Psoas muscle (tissue), 8 donors: ENCODE measurements at regions of chr11 and their contacts with region 1.

Region 1: GRCh38 chr11:76444384-76445123 is at the start of gene EMSY:
- DNase-seq: peak; percentile 95 to 98
- ATAC-seq: peak; percentile 95 to 97 (median 97)
- H3K4me3 ChIP-seq: peak within 1 kb of the TSS; percentile 96
- H3K27ac ChIP-seq: peak within 1 kb of the TSS; percentile 91
- H3K4me1 ChIP-seq: no peaks in the 10 kb centered on the region
- H3K27me3 ChIP-seq: no peaks in the 10 kb centered on the region
- CTCF ChIP-seq: no peak
- total RNA-seq, gene EMSY: 12.7 to 17.2 (median 15.9) TPM

Region 2: DNA sequence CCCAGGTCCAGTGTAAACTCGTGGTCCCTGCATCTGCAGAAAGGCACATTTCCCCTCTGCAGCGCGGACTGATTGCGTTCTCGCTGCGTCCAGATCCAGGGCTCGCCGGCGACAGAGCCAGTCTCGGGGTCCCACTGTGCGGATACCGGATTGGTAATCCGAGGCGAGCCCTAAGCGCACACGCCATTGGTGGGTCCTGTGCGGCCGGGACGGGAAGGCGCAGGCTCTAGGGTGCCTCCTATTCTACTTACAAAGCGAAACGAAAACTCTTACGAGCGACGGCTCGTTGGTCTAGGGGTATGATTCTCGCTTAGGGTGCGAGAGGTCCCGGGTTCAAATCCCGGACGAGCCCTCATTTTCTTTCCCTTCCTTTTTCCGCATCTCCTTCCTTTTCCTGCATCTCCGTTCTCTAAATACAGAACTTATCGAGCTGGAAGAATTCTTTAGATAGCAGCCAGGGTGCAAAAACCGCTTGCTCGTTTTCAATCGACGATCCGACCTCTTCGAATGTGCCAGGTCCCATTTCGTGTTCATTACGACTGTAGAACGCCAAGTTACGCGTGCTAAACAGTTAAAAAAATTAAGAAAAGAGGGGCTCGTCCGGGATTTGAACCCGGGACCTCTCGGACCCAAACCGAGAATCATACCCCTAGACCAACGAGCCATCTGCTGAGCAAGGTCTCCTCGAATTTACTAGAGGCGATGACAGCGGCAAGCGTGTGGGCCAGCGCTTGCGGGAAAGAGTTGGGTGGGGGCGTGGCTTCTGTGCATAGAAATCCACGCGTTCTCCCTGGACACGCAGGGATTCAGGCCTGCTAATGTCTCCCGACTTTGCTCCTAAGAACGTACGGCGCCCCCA is 209.1 kb before region 1 on chr11:
- intact Hi-C with region 1: loop called in 1 of 2 experiments (anchors 10 kb)
- DNase-seq: peak; percentile 86 to 94
- ATAC-seq: peak; percentile 80 to 88 (median 86)
- H3K4me3 ChIP-seq: peak overlapping the region; percentile 78
- H3K27ac ChIP-seq: peak overlapping the region; percentile 80
- H3K4me1 ChIP-seq: peaks cover 3% of the 10 kb centered on the region
- H3K27me3 ChIP-seq: no peaks in the 10 kb centered on the region
- CTCF ChIP-seq: no peak

Region 3: GRCh38 chr11:76380967-76381719 is 63.4 kb before region 1 on chr11 and contains the starts of genes GVQW3 and THAP12:
- intact Hi-C with region 1: loop called (anchors 1 to 2 kb)
- DNase-seq: peak; percentile 97 to 99
- ATAC-seq: peak; percentile 98 to 99 (median 98)
- H3K4me3 ChIP-seq: peak within 1 kb of the TSS; percentile 90
- H3K27ac ChIP-seq: peak within 1 kb of the TSS; percentile 84
- H3K4me1 ChIP-seq: peaks cover 32% of the 10 kb centered on the region
- H3K27me3 ChIP-seq: no peaks in the 10 kb centered on the region
- CTCF ChIP-seq: no peak
- total RNA-seq, gene GVQW3: 0.17 to 0.94 (median 0.55) TPM
- total RNA-seq, gene THAP12: 21.8 to 38.1 (median 34.7) TPM